ENCODE measurements at regions of chr14 and their contacts with region 1.

Region 1: GRCh38 chr14:75088574-75089373 is 19.3 kb downstream of the ZC2HC1C start:
- DNase-seq: peak; percentile 52
- H3K4me3 ChIP-seq: no peak overlapping the region
- H3K27ac ChIP-seq: no peak overlapping the region
- H3K4me1 ChIP-seq: peaks cover 3% of the 10 kb centered on the region
- H3K27me3 ChIP-seq: no peaks in the 10 kb centered on the region
- CTCF ChIP-seq: peak; percentile 77 to 82

Region 2: GRCh38 chr14:74913986-74914573 is 174.7 kb before region 1 on chr14:
- CTCF ChIA-PET with region 1: no interaction called
- dilution Hi-C with region 1: no loop called
- in situ Hi-C with region 1: loop called (anchors 10 kb)
- intact Hi-C with region 1: loop called (anchors 1 kb)
- DNase-seq: peak; percentile 57
- H3K4me3 ChIP-seq: no peak overlapping the region
- H3K27ac ChIP-seq: no peak overlapping the region
- H3K4me1 ChIP-seq: peaks cover 27% of the 10 kb centered on the region
- H3K27me3 ChIP-seq: no peaks in the 10 kb centered on the region
- CTCF ChIP-seq: peak; percentile 79 to 90

Region 3: GRCh38 chr14:75165586-75166391 is 77.0 kb after region 1 on chr14:
- CTCF ChIA-PET with region 1: no interaction called
- dilution Hi-C with region 1: no loop called
- in situ Hi-C with region 1: no loop called
- intact Hi-C with region 1: no loop called
- DNase-seq: no peak
- H3K4me3 ChIP-seq: no peak overlapping the region
- H3K27ac ChIP-seq: no peak overlapping the region
- H3K4me1 ChIP-seq: no peaks in the 10 kb centered on the region
- H3K27me3 ChIP-seq: no peaks in the 10 kb centered on the region
- CTCF ChIP-seq: no peak

Measured in mammary epithelial cell (primary cell).